PC-9 (cell line): ENCODE measurements at regions of chr16 and their contacts with region 1.

Region 1: GRCh38 chr16:66740010-66740409 is 11.4 kb downstream of the DYNC1LI2 start:
- DNase-seq: no peak
- H3K4me3 ChIP-seq: no peak overlapping the region
- H3K27ac ChIP-seq: no peak overlapping the region
- H3K4me1 ChIP-seq: peaks cover 36% of the 10 kb centered on the region
- H3K27me3 ChIP-seq: no peaks in the 10 kb centered on the region
- CTCF ChIP-seq: peak; percentile 76

Region 2: DNA sequence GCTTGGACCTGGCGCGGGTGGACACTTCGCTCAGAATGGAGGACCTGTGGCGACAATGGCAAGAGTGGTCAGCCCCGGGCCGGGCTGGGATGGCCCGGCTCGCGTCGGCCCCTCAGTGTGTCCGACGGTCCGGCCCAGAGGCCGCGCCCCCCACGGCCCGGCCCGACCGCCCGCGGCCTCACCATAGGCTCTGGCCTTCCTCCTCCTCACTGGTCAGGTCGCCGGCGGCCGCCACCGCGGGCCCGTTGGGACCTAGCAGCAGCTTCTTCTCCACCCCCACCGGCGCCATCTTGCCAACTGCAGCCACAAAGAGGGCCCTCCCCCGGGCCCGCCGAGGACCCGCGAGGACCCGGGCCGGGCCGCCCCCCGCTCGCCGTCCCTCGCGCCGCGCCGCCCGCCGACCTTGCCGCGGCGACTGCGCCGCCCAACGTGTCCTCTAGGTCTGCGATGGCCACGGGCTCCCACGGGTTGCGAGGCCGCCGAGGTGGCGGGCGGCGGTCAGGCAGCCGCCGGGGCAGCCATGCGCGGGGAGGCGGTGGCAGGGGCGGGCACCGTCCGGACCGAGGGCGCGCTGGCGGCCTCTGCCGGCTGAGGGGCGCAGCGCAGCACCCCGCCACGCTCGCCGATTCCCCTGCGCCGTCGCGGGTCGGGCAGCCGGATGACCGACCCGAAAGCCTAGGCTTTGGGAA is 11.4 kb after region 1 on chr16 and contains the start of gene DYNC1LI2:
- CTCF ChIA-PET with region 1: interaction called, 21 read pairs
- POLR2A ChIA-PET with region 1: no interaction called
- intact Hi-C with region 1: no loop called
- DNase-seq: peak; percentile 45 to 80
- H3K4me3 ChIP-seq: peak within 1 kb of the TSS; percentile 89
- H3K27ac ChIP-seq: peak within 1 kb of the TSS; percentile 61
- H3K4me1 ChIP-seq: peaks cover 14% of the 10 kb centered on the region
- H3K27me3 ChIP-seq: no peaks in the 10 kb centered on the region
- CTCF ChIP-seq: no peak
- total RNA-seq, gene DYNC1LI2: 92.7 and 109 TPM in 2 replicates

Region 3: GRCh38 chr16:66798161-66798560 is 58.2 kb after region 1 on chr16:
- CTCF ChIA-PET with region 1: no interaction called
- POLR2A ChIA-PET with region 1: no interaction called
- intact Hi-C with region 1: no loop called
- DNase-seq: no peak
- H3K4me3 ChIP-seq: no peak overlapping the region
- H3K27ac ChIP-seq: no peak overlapping the region
- H3K4me1 ChIP-seq: no peaks in the 10 kb centered on the region
- H3K27me3 ChIP-seq: no peaks in the 10 kb centered on the region
- CTCF ChIP-seq: no peak

Region 4: GRCh38 chr16:66947302-66948065 is 207.5 kb after region 1 on chr16:
- CTCF ChIA-PET with region 1: no interaction called
- POLR2A ChIA-PET with region 1: interaction called, 14 read pairs
- intact Hi-C with region 1: no loop called
- DNase-seq: peak; percentile 72 to 80
- H3K4me3 ChIP-seq: peak overlapping the region; percentile 66
- H3K27ac ChIP-seq: no peak overlapping the region
- H3K4me1 ChIP-seq: no peaks in the 10 kb centered on the region
- H3K27me3 ChIP-seq: no peaks in the 10 kb centered on the region
- CTCF ChIP-seq: peak; percentile 94

Region 5: DNA sequence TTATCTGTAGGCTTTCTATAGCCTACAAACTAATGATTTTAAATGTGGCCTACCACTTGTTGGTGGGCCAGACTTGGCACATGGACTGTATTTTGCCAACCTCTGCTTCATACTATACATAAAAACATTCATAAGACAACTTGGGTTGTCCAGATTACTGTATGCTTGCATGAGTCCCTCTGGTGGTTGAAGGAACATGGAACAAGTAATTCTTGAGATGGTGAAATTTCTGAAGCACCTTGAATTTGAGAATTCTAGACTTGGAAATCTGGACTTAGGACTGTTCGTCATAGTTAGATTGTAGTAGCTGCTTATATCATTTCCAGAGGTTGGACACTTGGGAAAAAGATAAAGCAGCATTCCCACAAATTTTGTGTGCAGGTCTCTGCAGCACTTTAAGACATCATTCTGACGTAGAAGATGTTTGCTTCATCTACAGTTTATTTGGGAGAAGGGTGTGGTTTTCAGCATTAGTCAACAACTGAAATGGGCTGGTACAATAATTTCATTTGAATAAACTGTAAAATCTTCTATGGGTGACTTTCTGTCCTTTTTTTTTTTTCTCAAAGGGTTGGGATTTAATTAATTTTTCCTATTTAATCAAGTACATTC is 1376.4 kb after region 1 on chr16:
- CTCF ChIA-PET with region 1: interaction called, 11 read pairs
- POLR2A ChIA-PET with region 1: no interaction called
- intact Hi-C with region 1: no loop called
- DNase-seq: no peak
- H3K4me3 ChIP-seq: no peak overlapping the region
- H3K27ac ChIP-seq: no peak overlapping the region
- H3K4me1 ChIP-seq: no peaks in the 10 kb centered on the region
- H3K27me3 ChIP-seq: no peaks in the 10 kb centered on the region
- CTCF ChIP-seq: peak; percentile 56; the same call in 1 of the 2 replicates